A673 (cell line): ENCODE measurements at regions of chr9 and their contacts with region 1.

Region 1: DNA sequence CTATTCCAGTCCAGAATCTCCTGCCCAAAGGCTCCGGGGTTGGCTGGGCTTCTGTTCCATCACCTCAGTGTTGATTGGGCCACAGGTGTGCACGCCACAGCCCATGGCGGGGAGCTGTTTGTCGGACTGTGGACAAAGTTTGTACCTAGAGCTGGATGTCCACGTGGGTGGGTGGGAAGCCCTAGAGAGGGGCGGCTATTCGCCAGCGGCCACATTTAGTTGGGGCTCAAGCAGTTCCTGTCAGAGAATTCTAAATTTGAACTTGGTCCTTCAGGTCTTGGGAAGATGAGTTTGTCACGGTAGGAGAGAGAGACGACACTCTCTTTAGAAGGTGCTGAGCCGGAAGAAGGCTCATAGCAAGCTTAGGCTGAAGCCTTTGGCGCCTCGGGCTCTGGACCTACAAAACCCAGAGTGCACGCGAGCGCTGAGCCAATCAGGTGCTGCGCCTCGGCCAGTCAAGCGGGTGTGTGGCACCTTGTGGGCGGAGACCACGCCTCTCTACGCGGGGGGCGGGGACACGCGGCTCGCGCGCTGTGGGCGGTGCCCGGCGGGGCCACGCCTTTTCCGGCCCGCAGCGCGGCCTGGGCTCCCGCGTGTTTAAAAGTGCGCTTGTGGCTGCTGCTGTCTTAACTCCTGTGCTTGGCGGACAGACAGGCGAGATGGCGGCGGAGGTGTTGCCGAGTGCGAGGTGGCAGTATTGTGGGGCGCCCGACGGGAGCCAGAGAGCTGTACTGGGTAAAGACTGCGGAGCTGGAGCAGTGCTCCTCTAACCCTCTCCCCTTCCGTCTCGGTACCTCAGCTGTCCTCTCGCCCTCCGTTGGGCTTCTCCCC is at the start of gene POLR1E:
- DNase-seq: peak; percentile 96
- H3K4me3 ChIP-seq: peak within 1 kb of the TSS; percentile 76
- H3K27ac ChIP-seq: peak within 1 kb of the TSS; percentile 83
- H3K4me1 ChIP-seq: peaks cover 21% of the 10 kb centered on the region
- H3K27me3 ChIP-seq: no peaks in the 10 kb centered on the region
- CTCF ChIP-seq: no peak
- total RNA-seq, gene POLR1E: 55.1 and 68.8 TPM in 2 replicates

Region 2: DNA sequence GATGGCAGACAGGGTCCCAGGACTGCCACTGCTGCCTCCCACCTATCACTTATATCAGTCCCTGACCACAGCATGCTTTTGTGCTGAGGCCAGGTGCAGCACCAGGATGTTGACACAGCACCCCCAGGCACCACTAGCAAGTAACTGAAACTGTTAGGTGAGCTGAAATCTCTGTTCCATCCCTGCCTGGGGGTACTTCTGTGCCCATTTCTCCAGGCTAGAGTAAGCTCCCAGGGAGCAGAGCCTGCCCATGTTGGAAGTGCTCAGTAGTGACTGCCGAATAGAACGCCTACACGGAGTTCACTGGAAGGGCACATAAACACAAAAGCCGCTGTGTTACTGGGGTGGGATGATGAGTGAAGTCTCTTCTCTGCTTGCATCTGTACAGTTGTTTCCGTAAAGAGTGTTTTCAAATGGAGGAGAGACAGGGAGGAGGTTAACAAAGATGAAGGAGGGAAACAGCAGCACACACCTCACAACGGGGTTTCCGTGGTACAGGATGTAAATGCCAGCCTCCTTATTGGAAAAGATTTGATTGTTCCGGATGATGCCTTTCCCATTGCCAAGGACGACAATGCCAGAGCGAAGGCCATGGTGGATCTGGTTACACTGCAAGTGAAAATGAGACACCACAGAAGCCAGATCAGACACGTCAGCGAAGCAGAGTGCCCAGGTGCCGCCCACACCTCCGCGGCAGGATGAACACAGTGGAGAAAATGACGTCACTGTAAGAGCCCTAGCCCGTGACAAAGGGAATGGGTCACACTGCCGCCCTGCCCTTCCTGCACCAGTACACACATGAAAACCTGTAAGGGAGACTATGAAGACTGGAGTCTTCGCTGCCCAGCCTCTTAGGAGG is 43.3 kb after region 1 on chr9:
- CTCF ChIA-PET with region 1: no interaction called
- POLR2A ChIA-PET with region 1: no interaction called
- intact Hi-C with region 1: loop called (anchors 5 kb)
- DNase-seq: no peak
- H3K4me3 ChIP-seq: no peak overlapping the region
- H3K27ac ChIP-seq: no peak overlapping the region
- H3K4me1 ChIP-seq: no peaks in the 10 kb centered on the region
- H3K27me3 ChIP-seq: no peaks in the 10 kb centered on the region
- CTCF ChIP-seq: no peak

Region 3: DNA sequence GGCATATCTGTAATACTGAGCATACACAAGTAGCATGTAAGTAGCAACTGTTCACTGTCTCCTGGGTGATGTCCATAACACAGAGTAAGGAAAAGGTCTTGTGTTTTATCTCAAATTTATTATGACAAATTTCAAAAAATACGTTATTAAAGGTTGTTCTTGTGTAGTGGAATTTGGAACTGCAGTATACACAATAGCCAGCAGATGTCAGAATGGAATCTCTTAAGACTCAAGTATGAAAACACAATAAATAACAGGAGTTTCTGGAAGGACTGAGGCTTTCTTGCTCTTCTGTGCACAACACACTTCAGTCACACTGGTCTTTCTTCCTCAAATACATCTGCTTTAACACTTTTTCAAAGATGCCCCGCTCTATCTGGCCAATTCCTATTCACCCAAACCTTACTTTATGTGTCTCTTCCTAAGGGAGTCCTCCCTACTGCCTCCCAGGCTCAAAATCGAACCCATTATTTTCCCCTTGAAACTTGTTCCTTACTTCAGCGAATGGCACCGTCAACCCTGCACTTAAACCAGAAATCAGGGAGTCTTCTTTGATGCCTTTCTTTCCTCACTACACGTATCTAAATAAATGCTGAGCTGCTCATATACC is 97.0 kb after region 1 on chr9:
- CTCF ChIA-PET with region 1: no interaction called
- POLR2A ChIA-PET with region 1: interaction called, 4 read pairs
- intact Hi-C with region 1: loop called (anchors 10 kb)
- DNase-seq: peak; percentile 73
- H3K4me3 ChIP-seq: no peak overlapping the region
- H3K27ac ChIP-seq: no peak overlapping the region
- H3K4me1 ChIP-seq: no peaks in the 10 kb centered on the region
- H3K27me3 ChIP-seq: no peaks in the 10 kb centered on the region
- CTCF ChIP-seq: peak; percentile 73

Region 4: DNA sequence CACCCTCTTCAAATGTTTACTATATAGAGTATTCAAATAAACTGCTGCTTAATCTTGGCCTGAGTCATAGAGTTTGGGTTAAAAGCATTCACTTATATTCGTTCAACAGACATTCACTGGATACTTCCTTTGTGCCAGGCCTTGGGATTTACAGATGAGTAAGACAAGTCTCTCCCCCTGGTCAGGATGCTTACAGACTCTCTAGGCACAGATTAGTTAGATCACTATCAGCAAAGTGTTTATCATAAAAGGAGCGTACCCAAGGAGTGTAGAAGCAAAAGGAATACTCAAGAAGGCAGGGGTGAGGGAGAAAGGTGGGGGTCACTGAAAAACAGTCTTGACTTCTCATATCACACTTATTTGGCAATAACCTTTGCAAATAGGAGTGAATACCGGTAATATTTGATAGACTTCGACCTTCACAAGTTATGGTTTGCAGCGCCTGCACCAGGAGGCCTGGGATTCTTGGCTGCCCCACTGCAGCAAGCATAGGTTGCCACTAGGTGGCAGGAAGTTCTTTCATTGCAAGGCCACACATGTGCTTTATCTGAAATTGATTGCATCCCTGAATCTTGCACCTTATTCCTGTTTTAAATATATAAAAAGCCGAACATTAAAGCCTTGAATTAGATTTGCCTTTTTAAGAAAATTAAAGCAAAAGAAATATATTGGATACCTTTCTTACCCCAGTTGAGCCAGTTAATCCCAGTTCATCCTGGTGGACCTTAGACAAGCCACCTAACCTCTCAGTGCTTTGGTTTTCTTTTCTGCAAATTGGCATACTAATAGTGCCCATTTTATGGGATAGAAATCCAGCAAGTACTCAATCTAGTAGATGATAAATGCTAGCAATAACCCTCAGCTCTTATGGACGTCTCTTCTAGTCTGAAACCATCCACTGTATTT is 261.5 kb after region 1 on chr9:
- CTCF ChIA-PET with region 1: no interaction called
- POLR2A ChIA-PET with region 1: no interaction called
- intact Hi-C with region 1: loop called (anchors 10 kb)
- DNase-seq: peak; percentile 74
- H3K4me3 ChIP-seq: no peak overlapping the region
- H3K27ac ChIP-seq: no peak overlapping the region
- H3K4me1 ChIP-seq: no peaks in the 10 kb centered on the region
- H3K27me3 ChIP-seq: no peaks in the 10 kb centered on the region
- CTCF ChIP-seq: peak; percentile 94

Region 5: DNA sequence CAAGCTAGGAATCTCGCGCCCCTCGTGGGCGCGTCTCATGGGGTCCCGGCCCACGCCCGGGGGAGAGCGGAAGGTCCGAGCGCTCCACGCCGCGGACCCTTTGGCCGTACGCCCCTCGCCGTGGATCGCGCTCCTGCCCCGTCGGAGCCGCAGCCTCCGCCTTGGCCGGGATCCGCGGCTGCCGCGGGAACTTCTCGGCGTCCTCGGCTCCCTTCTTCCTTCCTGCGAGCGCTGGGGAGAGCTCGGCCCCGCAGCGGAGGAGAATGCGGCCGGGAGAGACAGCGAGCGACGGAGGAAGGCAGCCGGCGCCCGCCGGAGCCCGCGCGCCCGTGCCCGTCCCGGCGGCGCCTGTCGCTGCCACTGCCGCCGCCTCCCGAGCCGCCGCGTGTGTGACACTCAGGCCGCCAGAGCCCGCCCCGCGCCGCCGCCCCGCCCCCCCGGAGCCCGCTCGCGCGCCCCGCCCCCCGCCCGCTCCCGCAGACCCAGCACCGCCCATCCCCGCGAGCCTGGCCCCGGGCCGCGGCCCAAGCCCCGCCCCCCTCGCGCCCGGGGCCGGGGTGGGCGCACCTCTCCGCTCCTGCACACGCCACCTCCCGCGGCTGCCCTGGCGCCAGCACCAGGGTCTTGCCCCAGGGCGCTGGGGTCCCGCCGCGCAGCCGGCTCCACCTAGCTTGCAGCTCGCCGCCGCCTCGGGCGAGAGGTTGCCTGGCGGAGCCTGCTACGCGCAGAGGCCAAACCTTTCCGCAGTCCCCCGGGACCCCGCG is 583.4 kb after region 1 on chr9 and contains the start of gene SHB:
- CTCF ChIA-PET with region 1: interaction called, 12 read pairs
- POLR2A ChIA-PET with region 1: no interaction called
- intact Hi-C with region 1: no loop called
- DNase-seq: peak; percentile 87
- H3K4me3 ChIP-seq: peak within 1 kb of the TSS; percentile 89
- H3K27ac ChIP-seq: peak within 1 kb of the TSS; percentile 91
- H3K4me1 ChIP-seq: peaks cover 20% of the 10 kb centered on the region
- H3K27me3 ChIP-seq: no peaks in the 10 kb centered on the region
- CTCF ChIP-seq: peak; percentile 50; the same call in 1 of the 2 replicates
- total RNA-seq, gene SHB: 14.7 and 20.7 TPM in 2 replicates

Region 6: GRCh38 chr9:38362852-38363593 is 877.4 kb after region 1 on chr9:
- CTCF ChIA-PET with region 1: no interaction called
- POLR2A ChIA-PET with region 1: no interaction called
- intact Hi-C with region 1: loop called (anchors 5 kb)
- DNase-seq: peak; percentile 69
- H3K4me3 ChIP-seq: no peak overlapping the region
- H3K27ac ChIP-seq: no peak overlapping the region
- H3K4me1 ChIP-seq: no peaks in the 10 kb centered on the region
- H3K27me3 ChIP-seq: no peaks in the 10 kb centered on the region
- CTCF ChIP-seq: peak; percentile 72

Region 7: GRCh38 chr9:38408719-38409118 is 923.1 kb after region 1 on chr9:
- CTCF ChIA-PET with region 1: no interaction called
- POLR2A ChIA-PET with region 1: no interaction called
- intact Hi-C with region 1: loop called (anchors 10 kb)
- DNase-seq: no peak
- H3K4me3 ChIP-seq: no peak overlapping the region
- H3K27ac ChIP-seq: no peak overlapping the region
- H3K4me1 ChIP-seq: no peaks in the 10 kb centered on the region
- H3K27me3 ChIP-seq: peaks cover 12% of the 10 kb centered on the region
- CTCF ChIP-seq: no peak